ENCODE measurements at regions of chr17 and their contacts with region 1.

Region 1: DNA sequence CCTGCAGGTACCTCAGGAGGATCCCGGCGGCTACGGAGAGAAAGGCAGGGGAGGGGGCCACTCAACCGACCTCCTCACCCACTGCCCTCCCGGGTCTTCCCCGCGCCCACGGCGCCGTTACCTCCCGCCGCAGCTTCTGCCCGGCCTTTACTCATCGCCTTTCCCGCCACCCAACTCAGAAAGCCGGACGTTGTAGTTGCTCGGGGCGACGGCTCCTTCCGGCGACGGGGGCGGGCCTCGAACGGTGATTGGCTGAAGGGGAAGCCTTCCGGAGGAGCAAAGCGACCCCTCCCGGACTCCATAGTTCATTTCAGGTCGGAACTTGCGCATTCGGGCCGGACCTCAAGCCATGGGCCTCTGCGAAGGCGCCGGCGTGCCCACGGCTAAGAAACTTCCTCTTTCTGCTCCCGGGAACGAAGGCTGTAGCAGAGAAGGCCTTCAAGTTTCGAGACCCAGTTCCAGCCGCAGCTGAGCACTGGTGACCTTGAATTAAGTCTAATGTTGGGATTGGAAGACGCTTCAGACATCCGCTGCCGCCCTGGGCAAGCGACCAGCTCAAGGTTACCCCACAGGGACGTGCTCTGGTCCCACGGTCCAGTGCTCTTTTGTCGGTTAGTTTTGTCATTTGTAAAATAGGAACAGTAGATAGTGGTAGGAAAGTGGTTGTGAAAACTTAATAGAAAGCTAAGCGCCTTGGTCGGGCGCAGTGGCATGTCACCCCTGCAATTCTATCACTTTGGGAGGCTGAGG is at the start of gene PSMC3IP:
- DNase-seq: peak; percentile 83 to 93 (median 88)
- H3K4me3 ChIP-seq: peak within 1 kb of the TSS; percentile 83 to 100
- H3K4me3 Mint-ChIP-seq: peak within 1 kb of the TSS; percentile 96 to 99 (median 99)
- H3K27ac ChIP-seq: peak within 1 kb of the TSS; percentile 84
- H3K27ac Mint-ChIP-seq: peak within 1 kb of the TSS; percentile 87 to 99 (median 97)
- H3K4me1 ChIP-seq: peaks cover 17% of the 10 kb centered on the region
- H3K4me1 Mint-ChIP-seq: peaks cover 18 to 44% (median 23%) of the 10 kb centered on the region in 4 donors
- H3K27me3 ChIP-seq: no peaks in the 10 kb centered on the region
- H3K27me3 Mint-ChIP-seq: no peaks in the 10 kb centered on the region
- total RNA-seq, gene PSMC3IP: 3.4 to 4.5 TPM

Region 2: GRCh38 chr17:42548070-42548837 is 29.5 kb before region 1 on chr17:
- CTCF ChIA-PET with region 1: interaction called, 25 read pairs
- POLR2A ChIA-PET with region 1: interaction called, 18 read pairs
- intact Hi-C with region 1: no loop called
- DNase-seq: peak; percentile 62 to 79 (median 69)
- H3K4me3 ChIP-seq: peak overlapping the region in 1 of 2 donors; percentile 45
- H3K4me3 Mint-ChIP-seq: peak overlapping the region in 5 of 8 donors; percentile 36 to 59 (median 56)
- H3K27ac ChIP-seq: no peak overlapping the region
- H3K27ac Mint-ChIP-seq: no peak overlapping the region
- H3K4me1 ChIP-seq: peaks cover 7% of the 10 kb centered on the region
- H3K4me1 Mint-ChIP-seq: peaks cover 6 to 22% (median 10%) of the 10 kb centered on the region in 4 donors
- H3K27me3 ChIP-seq: no peaks in the 10 kb centered on the region
- H3K27me3 Mint-ChIP-seq: no peaks in the 10 kb centered on the region

Region 3: GRCh38 chr17:42566883-42567573 is 10.7 kb before region 1 on chr17 and contains the start of gene MLX:
- CTCF ChIA-PET with region 1: interaction called, 37 read pairs
- POLR2A ChIA-PET with region 1: interaction called, 73 read pairs
- intact Hi-C with region 1: loop called (anchors 1 kb)
- DNase-seq: peak; percentile 90 to 91 (median 90)
- H3K4me3 ChIP-seq: peak within 1 kb of the TSS; percentile 89 to 97
- H3K4me3 Mint-ChIP-seq: peak within 1 kb of the TSS; percentile 94 to 98 (median 96)
- H3K27ac ChIP-seq: peak within 1 kb of the TSS; percentile 79
- H3K27ac Mint-ChIP-seq: peak within 1 kb of the TSS; percentile 95 to 98 (median 96)
- H3K4me1 ChIP-seq: peaks cover 56% of the 10 kb centered on the region
- H3K4me1 Mint-ChIP-seq: peaks cover 13 to 65% (median 42%) of the 10 kb centered on the region in 4 donors
- H3K27me3 ChIP-seq: no peaks in the 10 kb centered on the region
- H3K27me3 Mint-ChIP-seq: no peaks in the 10 kb centered on the region
- total RNA-seq, gene MLX: 73.3 to 73.7 TPM

Region 4: DNA sequence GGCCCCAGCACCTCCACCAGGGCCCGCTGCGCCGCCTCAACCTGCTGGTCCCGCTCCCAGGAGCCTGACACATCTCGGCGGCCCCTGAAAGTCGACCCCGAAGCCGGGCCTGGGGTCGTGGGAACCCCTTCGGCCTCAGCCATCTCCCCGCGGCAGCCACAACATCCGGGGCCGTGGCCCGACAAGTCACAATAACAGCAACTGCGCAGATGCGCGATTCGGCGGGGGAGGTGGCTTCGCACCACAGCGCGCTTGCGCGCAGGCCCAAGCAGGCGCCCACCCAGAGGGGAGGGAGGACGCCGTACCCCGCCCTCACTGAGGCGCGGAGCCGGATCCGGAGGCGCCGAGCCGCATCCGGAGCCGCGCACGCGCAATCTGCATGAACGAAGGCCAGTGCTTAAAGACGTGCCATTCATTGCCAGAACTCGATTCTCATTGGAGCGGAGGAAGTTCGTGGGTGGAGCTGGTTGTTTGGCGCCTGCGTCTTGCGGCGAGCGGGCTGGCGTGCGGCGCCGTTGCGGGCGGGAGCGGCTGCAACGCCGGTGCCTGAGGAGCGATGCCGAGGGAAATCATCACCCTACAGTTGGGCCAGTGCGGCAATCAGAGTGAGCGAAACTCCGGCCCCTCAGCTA is 31.6 kb after region 1 on chr17 and contains the starts of genes RETREG3 and TUBG1:
- CTCF ChIA-PET with region 1: interaction called, 64 read pairs
- POLR2A ChIA-PET with region 1: interaction called, 49 read pairs
- intact Hi-C with region 1: loop called (anchors 1 kb)
- DNase-seq: peak; percentile 98 to 100 (median 100)
- H3K4me3 ChIP-seq: peak within 1 kb of the TSS; percentile 87 to 92
- H3K4me3 Mint-ChIP-seq: peak within 1 kb of the TSS; percentile 99 to 100 (median 100)
- H3K27ac ChIP-seq: peak within 1 kb of the TSS; percentile 85
- H3K27ac Mint-ChIP-seq: peak within 1 kb of the TSS; percentile 90 to 100 (median 99)
- H3K4me1 ChIP-seq: peaks cover 47% of the 10 kb centered on the region
- H3K4me1 Mint-ChIP-seq: peaks cover 25 to 55% (median 40%) of the 10 kb centered on the region in 4 donors
- H3K27me3 ChIP-seq: no peaks in the 10 kb centered on the region
- H3K27me3 Mint-ChIP-seq: no peaks in the 10 kb centered on the region
- total RNA-seq, gene RETREG3: 128 to 134 TPM
- total RNA-seq, gene TUBG1: 13.6 to 16.5 TPM

Region 5: DNA sequence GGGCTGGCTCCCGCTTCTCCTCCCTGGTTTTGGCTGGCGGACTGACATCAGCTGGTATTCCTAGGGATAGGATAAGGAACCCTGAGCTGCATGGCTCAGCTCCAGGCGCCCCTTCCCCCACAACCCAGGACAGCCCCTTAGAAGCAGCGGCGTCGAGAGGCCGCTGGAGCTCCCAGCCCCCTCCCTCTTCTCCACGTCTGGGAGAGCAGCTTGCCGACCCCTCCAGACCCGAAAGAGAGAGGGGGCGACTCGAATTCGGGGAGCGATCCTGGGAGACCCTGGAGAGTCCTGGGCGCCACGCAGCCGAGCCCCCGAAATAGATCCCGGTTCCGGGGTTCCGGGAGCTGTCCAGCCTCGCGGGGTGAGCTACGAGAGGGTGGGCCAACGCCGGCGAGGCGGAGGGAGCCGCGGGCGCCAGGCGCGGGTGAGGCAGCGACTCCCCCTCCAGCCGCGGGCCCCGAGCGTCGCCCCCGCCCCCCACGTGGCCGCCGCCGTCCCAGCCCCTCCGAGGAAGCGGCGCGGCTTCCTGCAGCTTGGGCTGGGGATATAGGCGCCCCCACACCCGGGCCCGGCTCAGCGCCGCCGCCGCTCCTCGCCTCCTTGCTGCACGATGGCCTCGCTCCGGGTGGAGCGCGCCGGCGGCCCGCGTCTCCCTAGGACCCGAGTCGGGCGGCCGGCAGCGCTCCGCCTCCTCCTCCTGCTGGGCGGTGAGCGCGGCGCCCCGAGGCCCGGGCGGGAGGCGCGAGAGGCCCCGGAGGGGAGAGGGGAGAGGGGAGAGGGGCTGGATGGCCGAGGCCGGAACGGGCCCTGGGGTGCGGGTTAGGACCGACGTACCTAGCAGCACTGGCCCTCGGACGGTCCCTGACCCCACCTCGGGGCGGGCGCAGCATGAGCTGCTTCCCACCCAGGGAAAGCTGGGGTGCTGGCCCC is 183.2 kb after region 1 on chr17 and contains the start of gene RAMP2:
- CTCF ChIA-PET with region 1: interaction called, 35 read pairs
- POLR2A ChIA-PET with region 1: interaction called, 7 read pairs
- intact Hi-C with region 1: loop called (anchors 1 kb)
- DNase-seq: no peak
- H3K4me3 ChIP-seq: no peak within 1 kb of the TSS
- H3K4me3 Mint-ChIP-seq: peak within 1 kb of the TSS; percentile 4 to 75 (median 48)
- H3K27ac ChIP-seq: no peak within 1 kb of the TSS
- H3K27ac Mint-ChIP-seq: peak within 1 kb of the TSS in 2 of 7 donors; percentile 36 to 46
- H3K4me1 ChIP-seq: peaks cover 7% of the 10 kb centered on the region
- H3K4me1 Mint-ChIP-seq: peaks cover 2 to 10% (median 4%) of the 10 kb centered on the region in 4 donors
- H3K27me3 ChIP-seq: peaks cover 34% of the 10 kb centered on the region
- H3K27me3 Mint-ChIP-seq: peaks cover 35 to 52% of the 10 kb centered on the region in 2 donors
- total RNA-seq, gene RAMP2: not detected

Region 6: DNA sequence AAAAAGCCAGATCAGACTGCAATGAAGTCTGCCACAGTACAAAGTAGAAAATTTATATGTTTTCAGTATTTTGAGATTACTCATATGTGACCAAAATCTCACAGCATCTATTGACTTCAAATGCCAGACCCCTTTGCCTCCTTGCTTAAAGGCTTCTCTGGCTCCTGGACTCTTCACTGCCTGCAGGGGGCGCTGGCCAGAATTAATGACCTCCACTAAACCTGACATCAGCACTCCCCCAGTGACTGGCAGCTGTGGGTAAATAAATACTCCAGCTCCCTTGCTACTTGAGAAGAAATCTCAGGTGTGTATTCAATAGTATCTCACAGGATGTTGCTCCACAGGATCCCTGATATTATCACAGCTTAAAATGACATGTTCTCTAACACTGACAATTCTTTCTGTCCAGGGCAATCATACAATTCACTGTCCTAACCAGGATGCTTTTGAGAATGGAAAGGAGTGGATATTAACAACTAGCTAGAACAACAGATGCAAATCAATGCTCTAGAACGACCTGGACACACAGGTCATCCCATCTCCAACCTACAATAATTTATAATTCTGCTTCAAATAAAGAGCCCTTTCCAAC is 242.3 kb after region 1 on chr17:
- CTCF ChIA-PET with region 1: interaction called, 5 read pairs
- POLR2A ChIA-PET with region 1: interaction called, 7 read pairs
- intact Hi-C with region 1: loop called (anchors 1 kb)
- DNase-seq: peak; percentile 46 to 66 (median 49)
- H3K4me3 ChIP-seq: no peak overlapping the region
- H3K4me3 Mint-ChIP-seq: peak overlapping the region in 1 of 8 donors; percentile 26
- H3K27ac ChIP-seq: no peak overlapping the region
- H3K27ac Mint-ChIP-seq: peak overlapping the region; percentile 18 to 65 (median 36)
- H3K4me1 ChIP-seq: peaks cover 15% of the 10 kb centered on the region
- H3K4me1 Mint-ChIP-seq: peaks cover 16 to 41% (median 25%) of the 10 kb centered on the region in 4 donors
- H3K27me3 ChIP-seq: no peaks in the 10 kb centered on the region
- H3K27me3 Mint-ChIP-seq: no peaks in the 10 kb centered on the region

Region 7: DNA sequence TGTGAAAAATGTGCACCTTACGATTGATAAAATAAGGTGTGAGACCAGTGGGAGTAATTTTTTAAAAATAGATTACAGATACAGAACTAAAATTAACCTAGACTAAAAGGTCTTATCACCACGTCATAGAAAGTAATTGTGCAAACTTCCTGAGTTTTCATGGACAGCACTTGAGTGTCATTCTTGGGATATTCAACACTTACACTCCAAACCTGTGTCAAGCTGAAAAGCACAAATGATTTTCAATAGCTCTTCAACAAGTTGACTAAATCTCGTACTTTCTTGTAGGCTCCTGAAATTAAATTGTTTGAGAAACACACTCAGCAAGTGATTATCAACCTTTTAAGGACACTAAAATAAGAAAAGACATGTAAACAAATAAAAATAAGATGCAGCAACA is 527.0 kb after region 1 on chr17:
- CTCF ChIA-PET with region 1: no interaction called
- POLR2A ChIA-PET with region 1: no interaction called
- intact Hi-C with region 1: no loop called
- DNase-seq: no peak
- H3K4me3 ChIP-seq: no peak overlapping the region
- H3K4me3 Mint-ChIP-seq: no peak overlapping the region
- H3K27ac ChIP-seq: no peak overlapping the region
- H3K27ac Mint-ChIP-seq: no peak overlapping the region
- H3K4me1 ChIP-seq: no peaks in the 10 kb centered on the region
- H3K4me1 Mint-ChIP-seq: no peaks in the 10 kb centered on the region
- H3K27me3 ChIP-seq: no peaks in the 10 kb centered on the region
- H3K27me3 Mint-ChIP-seq: no peaks in the 10 kb centered on the region